A549 (cell line): ENCODE measurements at regions of chr10 and their contacts with region 1.

Region 1: GRCh38 chr10:12579954-12580858 is 230.9 kb downstream of the CAMK1D start:
- DNase-seq: peak; percentile 18 to 59
- ATAC-seq: peak; percentile 59 to 70
- H3K4me3 ChIP-seq: no peak overlapping the region
- H3K27ac ChIP-seq: peak overlapping the region in 1 of 2 experiments; percentile 51; a peak in 3 of 6 replicates
- H3K4me1 ChIP-seq: peaks cover 7% of the 10 kb centered on the region; the same call in 2 of the 3 replicates
- CTCF ChIP-seq: no peak
- EP300 ChIP-seq: no peak
- POLR2A ChIP-seq: no peak
- RAD21 ChIP-seq: no peak

Region 2: DNA sequence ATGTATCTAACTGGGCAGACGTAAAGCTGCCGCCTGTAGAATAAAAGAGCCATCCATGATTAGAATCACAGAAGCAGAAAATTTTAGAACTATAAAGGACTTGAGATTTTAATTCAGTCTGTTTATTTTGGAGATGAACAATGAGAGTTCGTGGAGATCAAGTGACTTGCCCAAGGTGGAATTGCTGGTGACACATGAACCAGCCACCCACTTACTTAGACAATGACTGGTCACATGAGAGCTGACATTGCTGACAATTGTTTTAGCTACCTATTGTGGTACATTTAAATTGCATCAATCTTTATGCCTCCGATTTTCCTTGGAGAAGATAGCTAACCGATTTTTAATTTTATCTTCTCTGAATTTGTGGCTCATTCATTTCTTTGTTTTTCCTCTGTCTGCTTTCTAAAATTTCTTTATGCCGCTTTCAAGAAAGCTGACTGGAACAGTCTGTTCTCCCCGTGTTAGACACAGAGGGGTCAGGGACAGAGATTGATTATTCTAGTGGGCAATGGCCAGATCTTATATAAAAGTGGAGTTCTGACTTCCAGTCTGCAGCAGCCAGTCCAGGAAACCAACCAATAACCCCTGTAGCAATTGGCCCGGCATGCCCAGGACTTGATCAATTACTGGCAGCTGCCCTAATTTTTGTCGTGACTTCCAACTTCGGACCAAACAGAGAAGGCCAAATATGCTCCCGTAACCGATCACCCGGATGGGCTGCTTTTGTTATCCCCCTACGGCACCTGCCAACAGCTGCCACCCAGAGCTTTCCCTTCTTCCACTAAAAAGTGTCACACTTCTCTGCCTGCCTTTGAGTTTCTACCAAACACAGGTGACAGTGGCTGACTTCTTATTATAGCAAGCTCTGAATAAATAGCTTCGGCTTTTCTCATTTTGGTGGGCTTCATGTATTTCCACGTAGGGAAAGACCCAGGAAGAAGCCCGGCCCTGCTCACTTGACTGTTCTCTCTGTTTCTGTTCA is 10.8 kb after region 1 on chr10:
- CTCF ChIA-PET with region 1: interaction called, 15 read pairs
- POLR2A ChIA-PET with region 1: no interaction called
- DNase-seq: no peak
- ATAC-seq: no peak
- H3K4me3 ChIP-seq: no peak overlapping the region
- H3K27ac ChIP-seq: no peak overlapping the region
- H3K4me1 ChIP-seq: peaks cover 18% of the 10 kb centered on the region
- CTCF ChIP-seq: no peak
- EP300 ChIP-seq: no peak
- POLR2A ChIP-seq: no peak
- RAD21 ChIP-seq: no peak